ENCODE measurements at regions of chr20 and their contacts with region 1.

Region 1: GRCh38 chr20:45450097-45450818 is 19.3 kb upstream of the WFDC2 start:
- DNase-seq: peak; percentile 86 to 93 (median 92)
- H3K4me3 ChIP-seq: no peak overlapping the region
- H3K27ac ChIP-seq: no peak overlapping the region
- H3K4me1 ChIP-seq: no peaks in the 10 kb centered on the region
- H3K27me3 ChIP-seq: no peaks in the 10 kb centered on the region

Region 2: DNA sequence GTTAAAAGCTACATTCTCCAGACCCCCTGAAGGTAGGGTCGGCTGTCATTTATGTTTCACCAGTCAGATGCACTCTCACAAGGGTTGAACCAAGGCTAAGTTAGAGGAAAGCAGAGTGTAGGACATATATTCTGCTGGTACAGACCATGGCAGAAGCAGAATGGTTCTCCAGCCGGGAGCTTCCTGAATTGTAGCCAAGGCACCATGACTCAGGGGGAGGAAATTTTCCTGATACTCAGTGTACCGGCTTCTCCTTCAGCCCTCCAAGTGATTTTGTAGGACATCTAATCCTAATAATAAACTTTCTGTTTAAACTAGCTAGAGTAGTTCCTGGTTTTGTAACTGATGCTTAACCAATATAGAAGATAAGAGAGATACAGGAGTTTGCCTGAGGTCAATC is 181.7 kb before region 1 on chr20:
- CTCF ChIA-PET with region 1: no interaction called
- POLR2A ChIA-PET with region 1: no interaction called
- DNase-seq: no peak
- H3K4me3 ChIP-seq: no peak overlapping the region
- H3K27ac ChIP-seq: no peak overlapping the region
- H3K4me1 ChIP-seq: no peaks in the 10 kb centered on the region
- H3K27me3 ChIP-seq: peaks cover 0 to 6% (median 2%) of the 10 kb centered on the region in 5 experiments

Region 3: GRCh38 chr20:45362804-45363610 is 87.3 kb before region 1 on chr20 and contains the start of gene SYS1:
- CTCF ChIA-PET with region 1: interaction called, 16 read pairs
- POLR2A ChIA-PET with region 1: no interaction called
- DNase-seq: peak; percentile 98 to 99 (median 98)
- H3K4me3 ChIP-seq: peak within 1 kb of the TSS; percentile 59 to 92 (median 85)
- H3K27ac ChIP-seq: peak within 1 kb of the TSS; percentile 89 to 95
- H3K4me1 ChIP-seq: peaks cover 15 to 58% (median 44%) of the 10 kb centered on the region in 4 experiments
- H3K27me3 ChIP-seq: no peaks in the 10 kb centered on the region

Region 4: GRCh38 chr20:45406259-45407066 is 43.8 kb before region 1 on chr20:
- CTCF ChIA-PET with region 1: interaction called, 15 read pairs
- POLR2A ChIA-PET with region 1: no interaction called
- DNase-seq: peak in 2 of 3 donors; percentile 16 to 52
- H3K4me3 ChIP-seq: peak overlapping the region; percentile 60 to 87 (median 74)
- H3K27ac ChIP-seq: no peak overlapping the region
- H3K4me1 ChIP-seq: peaks cover 2 to 38% (median 34%) of the 10 kb centered on the region in 4 experiments
- H3K27me3 ChIP-seq: peaks cover 4 to 14% (median 9%) of the 10 kb centered on the region in 5 experiments

Region 5: GRCh38 chr20:45470262-45470931 is 20.1 kb after region 1 on chr20:
- CTCF ChIA-PET with region 1: interaction called, 120 read pairs
- POLR2A ChIA-PET with region 1: no interaction called
- DNase-seq: peak in 2 of 3 donors; percentile 24 to 33
- H3K4me3 ChIP-seq: peak overlapping the region; percentile 11 to 80 (median 49)
- H3K27ac ChIP-seq: no peak overlapping the region
- H3K4me1 ChIP-seq: peaks cover 0 to 28% (median 21%) of the 10 kb centered on the region in 4 experiments
- H3K27me3 ChIP-seq: peaks cover 4 to 39% (median 28%) of the 10 kb centered on the region in 5 experiments

Region 6: GRCh38 chr20:45647441-45648050 is 197.3 kb after region 1 on chr20:
- CTCF ChIA-PET with region 1: no interaction called
- POLR2A ChIA-PET with region 1: no interaction called
- DNase-seq: no peak
- H3K4me3 ChIP-seq: no peak overlapping the region
- H3K27ac ChIP-seq: no peak overlapping the region
- H3K4me1 ChIP-seq: no peaks in the 10 kb centered on the region
- H3K27me3 ChIP-seq: no peaks in the 10 kb centered on the region

Measured in common myeloid progenitor, CD34-positive (primary cell).